CD8-positive, alpha-beta T cell (primary cell): ENCODE measurements at regions of chr9 and their contacts with region 1.

Region 1: GRCh38 chr9:33167046-33167808 is at the start of gene B4GALT1:
- DNase-seq: peak; percentile 94 to 99 (median 97)
- ATAC-seq: peak; percentile 82
- H3K4me3 ChIP-seq: peak within 1 kb of the TSS; percentile 86 to 96
- H3K4me3 Mint-ChIP-seq: peak within 1 kb of the TSS; percentile 93
- H3K27ac ChIP-seq: peak within 1 kb of the TSS; percentile 79 to 94
- H3K27ac Mint-ChIP-seq: peak within 1 kb of the TSS; percentile 99
- H3K4me1 ChIP-seq: peaks cover 54% of the 10 kb centered on the region
- H3K4me1 Mint-ChIP-seq: peaks cover 62% of the 10 kb centered on the region
- H3K27me3 ChIP-seq: no peaks in the 10 kb centered on the region
- H3K27me3 Mint-ChIP-seq: no peaks in the 10 kb centered on the region
- CTCF ChIP-seq: no peak
- total RNA-seq, gene B4GALT1: 139 to 140 TPM

Region 2: DNA sequence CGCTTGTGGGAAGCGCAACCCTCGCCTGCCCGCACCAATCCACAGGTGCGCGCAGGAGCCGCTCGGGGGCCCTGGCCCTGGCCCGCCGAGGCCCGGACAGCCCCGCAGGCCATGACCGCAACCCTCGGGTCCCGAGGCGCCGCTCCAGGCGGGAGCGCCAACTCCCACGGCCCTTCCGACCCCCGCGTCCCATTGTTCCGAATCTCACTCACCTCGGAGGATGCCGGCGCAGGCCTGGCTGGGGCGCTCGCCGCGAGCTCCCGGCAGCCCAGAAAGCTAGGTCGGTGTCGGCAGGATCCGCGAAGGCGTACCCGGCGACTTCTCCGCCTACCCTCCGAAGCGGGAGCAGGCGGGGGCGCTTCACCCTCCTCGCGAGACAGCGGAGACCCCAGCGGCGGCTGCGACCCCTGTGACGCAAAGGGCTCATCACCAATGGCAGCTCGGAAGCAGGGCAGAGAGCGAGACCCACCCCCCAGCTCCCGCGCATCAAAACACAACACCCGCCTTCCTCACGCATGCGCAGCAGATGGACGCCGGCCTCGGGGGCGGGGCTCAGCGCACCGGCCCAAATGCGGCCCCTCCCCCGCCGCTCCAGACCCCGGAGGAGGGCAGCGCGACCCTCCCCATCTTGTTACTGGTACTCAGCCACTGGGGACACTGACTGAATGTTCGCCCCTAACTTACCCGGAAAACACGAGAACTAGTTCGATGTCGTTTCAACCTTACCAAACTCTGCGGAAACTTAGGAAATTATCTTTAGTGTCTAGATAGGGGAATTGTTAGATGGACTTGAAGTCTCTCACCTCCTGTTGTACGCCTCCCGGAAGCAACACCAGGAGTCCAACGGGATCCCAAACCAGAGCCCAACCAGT is 616.4 kb before region 1 on chr9:
- CTCF ChIA-PET with region 1: no interaction called
- POLR2A ChIA-PET with region 1: no interaction called
- intact Hi-C with region 1: loop called in 1 of 2 experiments (anchors 10 kb)
- DNase-seq: peak; percentile 90 to 99 (median 96)
- ATAC-seq: peak; percentile 85
- H3K4me3 ChIP-seq: peak overlapping the region; percentile 85 to 87
- H3K4me3 Mint-ChIP-seq: peak overlapping the region; percentile 94
- H3K27ac ChIP-seq: peak overlapping the region; percentile 91 to 97
- H3K27ac Mint-ChIP-seq: peak overlapping the region; percentile 99
- H3K4me1 ChIP-seq: peaks cover 23% of the 10 kb centered on the region
- H3K4me1 Mint-ChIP-seq: peaks cover 57% of the 10 kb centered on the region
- H3K27me3 ChIP-seq: no peaks in the 10 kb centered on the region
- H3K27me3 Mint-ChIP-seq: no peaks in the 10 kb centered on the region
- CTCF ChIP-seq: peak; percentile 19

Region 3: GRCh38 chr9:33116860-33117259 is 50.4 kb before region 1 on chr9:
- CTCF ChIA-PET with region 1: interaction called, 7 read pairs
- POLR2A ChIA-PET with region 1: interaction called, 3 read pairs
- intact Hi-C with region 1: loop called in 1 of 2 experiments (anchors 10 kb)
- DNase-seq: no peak
- ATAC-seq: no peak
- H3K4me3 ChIP-seq: no peak overlapping the region
- H3K4me3 Mint-ChIP-seq: no peak overlapping the region
- H3K27ac ChIP-seq: peak overlapping the region in 1 of 2 experiments; percentile 44
- H3K27ac Mint-ChIP-seq: peak overlapping the region; percentile 41
- H3K4me1 ChIP-seq: peaks cover 15% of the 10 kb centered on the region
- H3K4me1 Mint-ChIP-seq: peaks cover 34% of the 10 kb centered on the region
- H3K27me3 ChIP-seq: no peaks in the 10 kb centered on the region
- H3K27me3 Mint-ChIP-seq: no peaks in the 10 kb centered on the region
- CTCF ChIP-seq: no peak

Region 4: GRCh38 chr9:33139421-33140228 is 27.6 kb before region 1 on chr9:
- CTCF ChIA-PET with region 1: interaction called, 10 read pairs
- POLR2A ChIA-PET with region 1: interaction called, 16 read pairs
- intact Hi-C with region 1: loop called (anchors 1 to 5 kb)
- DNase-seq: peak in 1 of 9 experiments; percentile 45
- ATAC-seq: no peak
- H3K4me3 ChIP-seq: no peak overlapping the region
- H3K4me3 Mint-ChIP-seq: peak overlapping the region; percentile 56
- H3K27ac ChIP-seq: peak overlapping the region in 1 of 2 experiments; percentile 81
- H3K27ac Mint-ChIP-seq: peak overlapping the region; percentile 83
- H3K4me1 ChIP-seq: peaks cover 93% of the 10 kb centered on the region
- H3K4me1 Mint-ChIP-seq: peaks cover 93% of the 10 kb centered on the region
- H3K27me3 ChIP-seq: no peaks in the 10 kb centered on the region
- H3K27me3 Mint-ChIP-seq: no peaks in the 10 kb centered on the region
- CTCF ChIP-seq: no peak

Region 5: DNA sequence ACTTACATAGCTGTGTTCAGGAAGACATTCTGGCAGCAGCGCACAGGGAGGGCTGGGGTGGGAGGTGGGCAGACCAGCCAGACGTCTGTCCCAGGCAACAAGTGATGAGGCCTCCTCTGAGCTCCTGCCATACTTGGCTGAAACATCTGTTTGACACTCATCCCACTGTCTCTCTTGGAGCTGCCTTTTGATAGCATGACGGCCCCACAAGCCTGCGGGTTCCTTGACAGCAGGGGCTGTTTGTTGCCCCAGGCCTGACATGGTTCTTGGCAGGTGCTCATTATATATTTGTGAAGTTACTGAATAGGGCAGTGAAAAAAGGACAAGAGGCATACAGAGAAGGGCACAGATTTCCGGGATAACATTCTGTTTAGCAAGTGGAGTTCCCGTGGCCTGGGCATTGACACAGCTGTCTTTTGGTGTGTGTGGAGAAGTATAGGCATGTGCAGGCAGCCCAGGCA is 22.1 kb after region 1 on chr9:
- CTCF ChIA-PET with region 1: no interaction called
- POLR2A ChIA-PET with region 1: no interaction called
- intact Hi-C with region 1: no loop called
- DNase-seq: no peak
- ATAC-seq: no peak
- H3K4me3 ChIP-seq: no peak overlapping the region
- H3K4me3 Mint-ChIP-seq: no peak overlapping the region
- H3K27ac ChIP-seq: no peak overlapping the region
- H3K27ac Mint-ChIP-seq: no peak overlapping the region
- H3K4me1 ChIP-seq: no peaks in the 10 kb centered on the region
- H3K4me1 Mint-ChIP-seq: no peaks in the 10 kb centered on the region
- H3K27me3 ChIP-seq: no peaks in the 10 kb centered on the region
- H3K27me3 Mint-ChIP-seq: peaks cover 2% of the 10 kb centered on the region
- CTCF ChIP-seq: no peak

Region 6: DNA sequence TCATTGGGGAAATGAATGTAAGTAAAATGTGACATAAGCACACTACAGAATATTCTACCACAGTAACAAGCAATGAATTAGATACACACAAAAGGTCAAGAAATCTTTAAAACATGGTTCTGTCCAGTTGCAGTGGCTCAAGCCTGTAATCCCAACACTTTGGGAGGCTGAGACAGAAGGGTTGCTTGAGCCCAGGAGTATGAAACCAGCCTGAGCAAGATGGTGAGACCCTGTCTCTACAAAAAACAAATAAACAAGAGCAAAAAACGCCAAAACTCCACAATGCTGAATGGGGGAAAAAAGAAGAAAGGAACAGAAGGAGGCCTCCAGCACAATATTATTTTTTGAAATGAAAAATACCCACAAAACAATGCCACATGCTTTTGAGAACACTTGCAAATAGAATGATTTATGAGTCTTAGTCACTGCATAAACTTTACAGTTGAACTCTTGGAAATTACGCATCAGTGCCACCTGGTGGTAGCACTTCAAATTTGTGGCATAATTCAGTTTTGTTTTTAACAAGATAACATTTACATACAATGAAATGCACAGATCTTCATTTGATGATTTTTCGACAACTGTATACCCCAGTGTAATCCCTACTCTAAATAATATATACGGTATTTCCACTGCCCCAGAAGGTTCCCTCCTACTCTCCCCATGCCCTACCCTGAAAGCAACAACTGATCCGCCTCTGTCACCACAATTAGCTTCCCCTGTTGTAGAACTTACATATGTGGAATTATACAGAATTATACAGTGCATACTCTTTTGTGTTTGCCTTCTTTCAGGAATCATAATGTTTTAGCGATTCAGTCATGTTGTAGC is 58.3 kb after region 1 on chr9:
- CTCF ChIA-PET with region 1: interaction called, 8 read pairs
- POLR2A ChIA-PET with region 1: interaction called, 5 read pairs
- intact Hi-C with region 1: loop called (anchors 1 to 2 kb)
- DNase-seq: peak; percentile 44 to 82 (median 74)
- ATAC-seq: peak; percentile 86
- H3K4me3 ChIP-seq: no peak overlapping the region
- H3K4me3 Mint-ChIP-seq: no peak overlapping the region
- H3K27ac ChIP-seq: no peak overlapping the region
- H3K27ac Mint-ChIP-seq: no peak overlapping the region
- H3K4me1 ChIP-seq: no peaks in the 10 kb centered on the region
- H3K4me1 Mint-ChIP-seq: peaks cover 13% of the 10 kb centered on the region
- H3K27me3 ChIP-seq: no peaks in the 10 kb centered on the region
- H3K27me3 Mint-ChIP-seq: peaks cover 2% of the 10 kb centered on the region
- CTCF ChIP-seq: peak; percentile 78

Region 7: DNA sequence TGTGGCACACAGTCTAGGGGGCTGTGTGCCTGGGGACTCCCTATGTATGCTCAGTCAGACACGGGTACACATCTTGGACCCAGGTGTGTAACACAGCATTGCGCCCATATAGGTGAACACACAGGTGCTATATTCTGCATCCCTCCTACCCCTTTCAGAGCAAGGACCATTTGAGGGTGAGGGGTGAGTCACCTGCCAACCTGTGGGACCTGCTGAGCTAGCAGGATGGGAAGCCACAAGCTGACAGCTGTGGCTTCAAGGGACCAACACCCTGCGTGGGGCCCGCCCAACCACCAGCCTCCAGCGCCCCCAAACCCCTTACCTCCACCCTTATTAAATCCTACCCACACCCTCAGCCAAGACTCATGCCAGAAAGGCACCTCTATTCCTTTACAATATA is 249.8 kb after region 1 on chr9:
- CTCF ChIA-PET with region 1: no interaction called
- POLR2A ChIA-PET with region 1: no interaction called
- intact Hi-C with region 1: no loop called
- DNase-seq: peak in 8 of 9 experiments; percentile 30 to 69 (median 57)
- ATAC-seq: peak; percentile 21
- H3K4me3 ChIP-seq: peak overlapping the region in 1 of 2 experiments; percentile 16
- H3K4me3 Mint-ChIP-seq: peak overlapping the region; percentile 62
- H3K27ac ChIP-seq: no peak overlapping the region
- H3K27ac Mint-ChIP-seq: peak overlapping the region; percentile 95
- H3K4me1 ChIP-seq: peaks cover 42% of the 10 kb centered on the region
- H3K4me1 Mint-ChIP-seq: peaks cover 51% of the 10 kb centered on the region
- H3K27me3 ChIP-seq: no peaks in the 10 kb centered on the region
- H3K27me3 Mint-ChIP-seq: no peaks in the 10 kb centered on the region
- CTCF ChIP-seq: no peak

Region 8: DNA sequence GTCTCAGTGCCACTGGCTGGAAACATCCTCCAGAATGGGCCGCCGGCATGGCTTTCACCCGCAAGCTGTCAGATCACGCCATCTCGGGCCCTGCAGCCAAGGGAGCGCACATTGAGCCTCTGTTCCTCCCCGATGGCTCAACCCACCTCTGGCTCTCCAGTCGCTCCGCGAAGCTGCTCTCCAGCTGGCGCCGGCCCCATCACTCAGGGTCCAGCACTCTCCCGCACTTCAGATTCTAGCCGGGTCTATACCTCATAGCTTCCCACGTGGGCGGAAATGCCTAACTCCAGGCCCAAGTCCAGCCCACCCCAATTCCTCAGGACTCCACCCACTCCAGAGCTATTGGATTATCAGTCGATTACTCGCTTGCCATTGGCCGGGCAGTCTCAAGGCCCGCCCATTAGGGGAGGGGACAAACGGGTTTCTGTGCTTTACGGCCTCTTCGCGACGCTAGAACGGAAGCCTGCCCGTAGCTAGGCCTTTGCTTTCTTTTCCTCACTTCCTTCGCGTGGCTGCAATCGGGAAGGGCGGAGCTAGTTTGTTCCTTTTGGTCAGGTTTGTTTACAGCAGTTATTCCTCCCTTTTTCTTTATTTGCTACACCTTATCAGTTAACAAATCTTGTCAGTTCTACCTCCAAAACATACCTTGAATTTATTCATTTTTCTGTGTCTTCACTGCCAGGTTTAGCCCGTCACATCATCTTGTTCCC is 306.6 kb after region 1 on chr9 and contains the start of gene NOL6:
- CTCF ChIA-PET with region 1: no interaction called
- POLR2A ChIA-PET with region 1: no interaction called
- intact Hi-C with region 1: loop called in 1 of 2 experiments (anchors 2 kb)
- DNase-seq: peak; percentile 97 to 99 (median 98)
- ATAC-seq: peak; percentile 99
- H3K4me3 ChIP-seq: peak within 1 kb of the TSS; percentile 91 to 94
- H3K4me3 Mint-ChIP-seq: peak within 1 kb of the TSS; percentile 99
- H3K27ac ChIP-seq: peak within 1 kb of the TSS; percentile 76 to 80
- H3K27ac Mint-ChIP-seq: peak within 1 kb of the TSS; percentile 96
- H3K4me1 ChIP-seq: peaks cover 22% of the 10 kb centered on the region
- H3K4me1 Mint-ChIP-seq: peaks cover 32% of the 10 kb centered on the region
- H3K27me3 ChIP-seq: no peaks in the 10 kb centered on the region
- H3K27me3 Mint-ChIP-seq: no peaks in the 10 kb centered on the region
- CTCF ChIP-seq: no peak
- total RNA-seq, gene NOL6: 41.8 to 42.3 TPM

Region 9: GRCh38 chr9:33676746-33677505 is 509.7 kb after region 1 on chr9:
- CTCF ChIA-PET with region 1: no interaction called
- POLR2A ChIA-PET with region 1: no interaction called
- intact Hi-C with region 1: no loop called
- DNase-seq: peak in 7 of 9 experiments; percentile 1 to 55 (median 17)
- ATAC-seq: peak; percentile 49
- H3K4me3 ChIP-seq: peak overlapping the region; percentile 33 to 43
- H3K4me3 Mint-ChIP-seq: peak overlapping the region; percentile 91
- H3K27ac ChIP-seq: no peak overlapping the region
- H3K27ac Mint-ChIP-seq: no peak overlapping the region
- H3K4me1 ChIP-seq: no peaks in the 10 kb centered on the region
- H3K4me1 Mint-ChIP-seq: peaks cover 9% of the 10 kb centered on the region
- H3K27me3 ChIP-seq: peaks cover 0 to 14% of the 10 kb centered on the region in 2 experiments
- H3K27me3 Mint-ChIP-seq: peaks cover 67% of the 10 kb centered on the region
- CTCF ChIP-seq: no peak